Posterior vena cava (tissue), 2 donors: ENCODE measurements at regions of chr1 and their contacts with region 1.

Region 1: GRCh38 chr1:51433269-51433971 is 85.6 kb downstream of the EPS15 start:
- DNase-seq: no peak

Region 2: DNA sequence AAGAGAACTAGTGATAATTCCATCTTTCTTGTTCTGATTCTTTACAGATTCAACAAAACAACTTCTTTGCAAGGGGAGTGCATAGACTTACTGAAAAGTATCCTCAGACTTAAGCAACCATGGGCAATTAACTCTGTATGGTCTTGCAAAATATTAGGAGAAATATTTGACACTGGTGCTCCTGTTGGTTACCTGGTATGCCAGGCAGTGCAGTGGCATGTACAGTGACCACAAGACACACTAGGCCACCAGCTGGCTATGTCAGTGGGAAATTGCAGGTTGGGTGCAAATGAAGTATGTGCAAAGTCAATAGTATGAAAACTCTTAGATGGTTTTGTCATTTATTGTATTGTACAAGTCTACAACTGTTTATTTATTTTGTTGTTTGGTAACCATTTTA is 51.2 kb after region 1 on chr1:
- intact Hi-C with region 1: loop called in 1 of 2 experiments (anchors 2 kb)
- DNase-seq: no peak